Aorta (tissue), 5 donors: ENCODE measurements at regions of chr10 and their contacts with region 1.

Region 1: GRCh38 chr10:31031558-31032257 is at the start of gene ZNF438:
- DNase-seq: peak; percentile 97 to 99
- ATAC-seq: peak; percentile 98
- H3K4me3 ChIP-seq: peak within 1 kb of the TSS; percentile 28 to 47
- H3K27ac ChIP-seq: peak within 1 kb of the TSS; percentile 95 to 97
- H3K4me1 ChIP-seq: peaks cover 2 to 4% of the 10 kb centered on the region in 2 donors
- H3K27me3 ChIP-seq: no peaks in the 10 kb centered on the region
- total RNA-seq, gene ZNF438: 11.6 to 16.5 TPM

Region 2: GRCh38 chr10:30840406-30841050 is 191.2 kb before region 1 on chr10:
- intact Hi-C with region 1: no loop called
- DNase-seq: no peak
- ATAC-seq: peak; percentile 74
- H3K4me3 ChIP-seq: no peak overlapping the region
- H3K27ac ChIP-seq: peak overlapping the region in 1 of 2 donors; percentile 11
- H3K4me1 ChIP-seq: peaks cover 2 to 3% of the 10 kb centered on the region in 2 donors
- H3K27me3 ChIP-seq: no peaks in the 10 kb centered on the region

Region 3: DNA sequence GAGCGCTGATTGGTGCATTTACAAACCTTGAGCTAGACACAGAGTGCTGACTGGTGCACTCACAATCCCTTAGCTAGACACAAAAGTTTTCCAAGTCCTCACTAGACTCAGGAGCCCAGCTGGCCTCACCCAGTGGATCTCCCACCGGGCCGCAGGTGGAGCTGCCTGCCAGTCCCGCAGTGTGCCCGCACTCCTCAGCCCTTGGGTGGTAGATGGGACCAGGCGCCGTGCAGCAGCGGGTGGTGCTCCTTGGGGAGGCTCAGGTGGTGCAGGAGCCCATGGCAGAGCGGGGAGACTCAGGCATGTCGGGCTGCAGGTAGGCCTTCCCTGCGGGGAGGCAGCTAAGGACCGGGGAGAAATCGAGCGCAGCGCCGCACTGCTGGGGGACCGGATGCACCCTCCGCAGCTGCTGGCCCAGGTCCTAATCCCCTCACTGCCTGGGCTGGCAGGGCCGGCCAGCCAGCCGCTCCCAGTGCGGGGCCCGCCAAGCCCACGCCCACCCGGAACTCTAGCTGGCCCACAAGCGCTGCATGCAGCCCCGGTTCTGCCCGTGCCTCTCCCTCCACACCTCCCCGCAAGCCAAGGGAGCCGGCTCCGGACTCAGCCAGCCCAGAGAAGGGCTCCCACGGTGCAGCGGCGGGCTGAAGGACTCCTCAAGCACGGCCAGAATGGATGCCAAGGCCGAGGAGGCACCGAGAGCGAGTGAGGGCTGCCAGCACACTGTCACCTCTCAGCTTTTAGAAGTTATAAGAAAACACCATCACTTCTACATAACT is 128.9 kb before region 1 on chr10:
- intact Hi-C with region 1: no loop called
- DNase-seq: peak; percentile 40 to 71
- ATAC-seq: peak; percentile 54
- H3K4me3 ChIP-seq: no peak overlapping the region
- H3K27ac ChIP-seq: no peak overlapping the region
- H3K4me1 ChIP-seq: no peaks in the 10 kb centered on the region
- H3K27me3 ChIP-seq: no peaks in the 10 kb centered on the region

Region 4: DNA sequence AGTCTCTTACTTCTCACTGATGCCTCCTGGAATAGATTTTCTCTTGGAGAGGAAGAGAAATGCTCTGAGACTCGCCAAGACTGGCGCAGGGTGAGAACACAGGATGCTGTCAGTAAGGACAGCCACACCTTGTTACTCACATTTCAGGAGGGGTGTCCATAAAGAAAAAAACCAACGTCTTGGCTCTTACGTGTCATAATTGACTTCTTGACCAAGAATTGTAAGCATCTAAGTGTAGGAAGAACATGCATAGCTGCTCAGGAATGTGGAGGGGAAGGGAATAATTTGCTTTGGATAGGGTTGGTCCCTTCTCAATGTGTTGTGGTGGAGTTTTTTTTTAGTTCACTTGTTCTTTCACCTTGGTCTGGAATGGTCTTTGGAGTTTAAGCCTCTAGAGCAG is 43.7 kb after region 1 on chr10:
- intact Hi-C with region 1: loop called (anchors 5 kb)
- DNase-seq: no peak
- ATAC-seq: no peak
- H3K4me3 ChIP-seq: no peak overlapping the region
- H3K27ac ChIP-seq: peak overlapping the region; percentile 77 to 99
- H3K4me1 ChIP-seq: peaks cover 14 to 20% of the 10 kb centered on the region in 2 donors
- H3K27me3 ChIP-seq: no peaks in the 10 kb centered on the region

Region 5: DNA sequence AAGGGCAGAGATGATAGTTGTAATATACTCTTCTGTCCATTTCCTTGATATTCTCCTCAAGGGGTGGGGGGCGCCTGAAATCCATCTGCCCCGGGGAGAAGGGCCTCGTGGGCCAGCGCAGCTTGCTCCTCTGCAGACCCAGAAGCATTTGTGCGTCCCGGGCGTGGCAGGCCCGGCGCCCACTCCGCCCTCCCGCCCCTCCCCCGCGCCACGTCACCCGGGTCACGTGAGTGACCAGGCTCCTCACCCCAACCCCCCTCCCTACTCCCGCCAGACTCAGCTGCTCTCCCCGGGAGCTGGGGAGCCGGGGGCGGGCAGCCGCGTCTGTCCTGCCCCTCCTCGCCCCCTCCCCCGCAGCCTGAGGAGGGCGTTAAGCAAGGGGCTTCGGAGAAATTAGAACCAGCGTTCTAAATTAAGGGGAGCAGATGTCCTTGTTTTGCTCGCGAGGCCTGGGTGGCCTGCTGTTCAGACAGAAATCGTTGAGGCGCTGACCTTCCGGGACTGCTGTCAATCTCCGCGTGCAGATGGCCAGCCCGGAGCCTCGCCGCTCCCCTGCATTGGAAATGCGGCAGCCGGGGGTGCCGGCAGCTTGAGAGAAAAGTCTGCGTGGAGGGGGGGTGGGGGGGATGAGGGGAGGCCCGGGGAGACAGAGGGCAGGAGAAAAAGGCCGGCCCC is 102.1 kb after region 1 on chr10:
- intact Hi-C with region 1: loop called (anchors 5 kb)
- DNase-seq: peak; percentile 88 to 95
- ATAC-seq: peak; percentile 89
- H3K4me3 ChIP-seq: peak overlapping the region; percentile 3 to 75
- H3K27ac ChIP-seq: peak overlapping the region; percentile 87 to 97
- H3K4me1 ChIP-seq: peaks cover 0 to 4% of the 10 kb centered on the region in 2 donors
- H3K27me3 ChIP-seq: no peaks in the 10 kb centered on the region

Region 6: DNA sequence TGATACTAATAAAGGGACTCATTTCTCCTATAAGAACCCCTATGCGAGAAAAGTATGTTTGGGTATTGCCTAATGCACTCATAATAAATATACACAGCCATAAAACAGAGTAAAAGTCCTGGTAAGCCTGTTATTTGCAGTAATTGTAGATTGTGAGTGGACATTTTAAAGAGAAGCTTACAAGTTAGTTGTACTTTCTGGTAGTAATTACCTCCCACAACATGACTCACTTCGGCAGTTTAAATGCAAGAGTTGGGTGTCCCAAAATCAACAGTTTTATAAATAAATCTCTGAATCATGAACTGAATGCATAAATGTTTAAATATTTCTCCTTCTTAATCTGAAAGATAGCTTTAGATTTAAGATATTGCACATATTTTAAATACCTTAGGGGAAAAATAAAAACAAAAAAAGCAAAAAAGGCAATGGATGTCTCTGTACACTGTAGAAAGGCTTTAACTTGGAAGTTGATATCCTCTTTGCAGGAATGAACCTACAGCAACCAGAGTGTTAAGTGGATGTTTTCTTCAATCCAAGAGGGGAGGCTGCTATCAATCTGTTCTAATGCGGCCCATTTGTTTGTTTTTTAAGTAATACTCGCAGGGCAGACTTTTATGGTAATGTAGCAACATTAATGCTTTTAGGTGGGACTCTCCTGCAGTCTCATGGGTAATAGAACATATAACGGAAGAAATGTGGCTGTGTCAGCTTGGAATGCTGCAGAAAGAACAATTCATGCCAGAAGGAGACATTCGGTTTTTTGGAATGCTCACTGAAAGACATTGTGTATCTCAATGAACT is 230.0 kb after region 1 on chr10:
- intact Hi-C with region 1: loop called in 1 of 2 experiments (anchors 5 kb)
- DNase-seq: no peak
- ATAC-seq: peak; percentile 74
- H3K4me3 ChIP-seq: peak overlapping the region; percentile 11 to 76
- H3K27ac ChIP-seq: peak overlapping the region; percentile 71 to 90
- H3K4me1 ChIP-seq: peaks cover 1 to 3% of the 10 kb centered on the region in 2 donors
- H3K27me3 ChIP-seq: no peaks in the 10 kb centered on the region